Activated CD4-positive, alpha-beta T cell treated with anti-CD3 and anti-CD28 coated beads for 36 hours (primary cell): ENCODE measurements at regions of chr21 and their contacts with region 1.

Region 1: DNA sequence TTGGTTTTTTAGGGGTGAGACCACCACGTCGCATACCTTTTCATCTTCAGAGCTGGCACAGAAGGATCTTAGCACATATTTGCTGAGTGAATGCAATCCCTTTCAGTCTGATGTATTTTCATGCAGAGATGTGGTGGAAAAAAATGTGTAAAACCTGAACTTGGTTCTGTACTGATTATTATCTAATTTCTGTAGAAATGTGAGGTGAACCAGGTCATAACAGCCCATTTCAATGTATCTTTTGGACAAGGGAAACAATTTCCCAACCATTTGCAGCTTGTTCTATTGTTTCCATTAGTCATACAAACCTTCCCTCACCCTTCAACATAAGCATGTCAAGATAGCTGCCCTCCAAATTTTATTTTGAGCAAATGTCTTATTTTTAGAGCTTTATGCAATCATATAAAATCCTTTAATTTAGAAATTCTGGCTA is 46.8 kb upstream of the RUNX1 start:
- DNase-seq: peak; percentile 20
- ATAC-seq: peak; percentile 25
- H3K4me3 Mint-ChIP-seq: no peak overlapping the region
- H3K27ac Mint-ChIP-seq: peak overlapping the region; percentile 86
- H3K4me1 Mint-ChIP-seq: peaks cover 50% of the 10 kb centered on the region
- H3K27me3 Mint-ChIP-seq: peaks cover 2% of the 10 kb centered on the region

Region 2: GRCh38 chr21:34967509-34968289 is 128.2 kb before region 1 on chr21:
- CTCF ChIA-PET with region 1: no interaction called
- POLR2A ChIA-PET with region 1: no interaction called
- intact Hi-C with region 1: loop called (anchors 2 kb)
- DNase-seq: peak; percentile 73
- ATAC-seq: peak; percentile 70
- H3K4me3 Mint-ChIP-seq: peak overlapping the region; percentile 61
- H3K27ac Mint-ChIP-seq: peak overlapping the region; percentile 99
- H3K4me1 Mint-ChIP-seq: peaks cover 91% of the 10 kb centered on the region
- H3K27me3 Mint-ChIP-seq: no peaks in the 10 kb centered on the region

Region 3: GRCh38 chr21:35084869-35085268 is 11.0 kb before region 1 on chr21:
- CTCF ChIA-PET with region 1: interaction called, 9 read pairs
- POLR2A ChIA-PET with region 1: interaction called, 17 read pairs
- intact Hi-C with region 1: loop called (anchors 1 kb)
- DNase-seq: no peak
- ATAC-seq: no peak
- H3K4me3 Mint-ChIP-seq: no peak overlapping the region
- H3K27ac Mint-ChIP-seq: no peak overlapping the region
- H3K4me1 Mint-ChIP-seq: peaks cover 44% of the 10 kb centered on the region
- H3K27me3 Mint-ChIP-seq: no peaks in the 10 kb centered on the region

Region 4: DNA sequence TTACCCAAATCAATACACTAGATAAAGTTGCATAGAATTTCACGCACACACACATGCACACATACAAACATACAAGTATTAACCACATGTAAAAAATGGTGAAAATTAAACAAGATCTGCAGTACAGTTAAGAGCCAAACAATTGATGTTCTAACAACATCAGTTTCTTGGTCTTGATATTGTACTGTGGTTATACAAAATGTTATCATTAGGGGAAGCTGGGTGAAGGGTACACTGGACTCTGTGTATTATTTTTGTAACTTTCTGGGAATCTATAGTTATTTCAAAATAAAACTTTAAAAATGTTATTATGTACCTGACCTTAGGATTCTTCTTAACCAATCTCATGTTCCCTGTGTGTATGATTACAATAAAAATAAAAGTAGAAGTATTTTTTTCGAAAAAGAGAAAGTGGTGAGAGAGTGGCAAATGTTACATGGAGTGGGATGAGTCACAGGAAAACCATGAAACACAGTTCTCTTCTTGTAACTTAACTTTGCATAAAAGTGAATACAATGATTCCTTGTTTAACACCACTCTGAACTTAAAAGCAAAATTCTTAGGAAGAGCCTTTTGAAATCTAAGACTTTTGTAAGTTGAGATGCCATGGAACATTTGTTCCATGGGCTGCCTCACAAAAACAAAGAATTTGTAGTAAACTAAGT is 54.8 kb after region 1 on chr21:
- CTCF ChIA-PET with region 1: no interaction called
- POLR2A ChIA-PET with region 1: no interaction called
- intact Hi-C with region 1: loop called (anchors 2 kb)
- DNase-seq: no peak
- ATAC-seq: peak; percentile 72
- H3K4me3 Mint-ChIP-seq: peak overlapping the region; percentile 18
- H3K27ac Mint-ChIP-seq: peak overlapping the region; percentile 90
- H3K4me1 Mint-ChIP-seq: peaks cover 63% of the 10 kb centered on the region
- H3K27me3 Mint-ChIP-seq: no peaks in the 10 kb centered on the region

Region 5: DNA sequence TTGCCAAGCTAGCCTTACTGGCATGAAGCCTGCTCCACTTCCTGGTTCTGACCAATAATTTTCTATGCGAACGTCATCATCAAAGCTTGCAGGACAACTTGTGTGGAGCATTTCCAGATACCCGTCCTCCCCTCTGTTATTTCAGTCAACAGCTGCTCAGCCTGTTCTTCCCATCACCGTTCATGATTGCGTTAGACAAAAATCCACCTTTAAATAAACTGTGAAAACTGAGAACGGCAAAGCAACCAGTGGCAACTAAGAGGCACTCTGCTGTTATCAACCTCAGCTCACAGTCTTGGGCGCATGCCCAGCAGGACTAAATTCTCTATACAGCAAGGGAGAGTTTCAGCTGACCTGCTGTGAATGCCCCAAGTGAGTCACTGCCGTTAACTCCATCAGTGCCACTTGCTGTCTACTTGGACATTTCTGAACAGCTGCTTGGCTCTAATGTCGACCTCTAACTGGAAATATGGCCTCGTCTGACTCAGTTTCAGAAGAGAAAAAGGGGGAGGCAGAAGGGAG is 160.7 kb after region 1 on chr21:
- CTCF ChIA-PET with region 1: no interaction called
- POLR2A ChIA-PET with region 1: interaction called, 4 read pairs
- intact Hi-C with region 1: loop called in 1 of 2 experiments (anchors 1 kb)
- DNase-seq: no peak
- ATAC-seq: no peak
- H3K4me3 Mint-ChIP-seq: no peak overlapping the region
- H3K27ac Mint-ChIP-seq: no peak overlapping the region
- H3K4me1 Mint-ChIP-seq: peaks cover 32% of the 10 kb centered on the region
- H3K27me3 Mint-ChIP-seq: peaks cover 5% of the 10 kb centered on the region

Region 6: GRCh38 chr21:35352066-35352770 is 256.3 kb after region 1 on chr21:
- CTCF ChIA-PET with region 1: interaction called, 3 read pairs
- POLR2A ChIA-PET with region 1: no interaction called
- intact Hi-C with region 1: loop called (anchors 2 to 5 kb)
- DNase-seq: no peak
- ATAC-seq: no peak
- H3K4me3 Mint-ChIP-seq: no peak overlapping the region
- H3K27ac Mint-ChIP-seq: no peak overlapping the region
- H3K4me1 Mint-ChIP-seq: peaks cover 37% of the 10 kb centered on the region
- H3K27me3 Mint-ChIP-seq: peaks cover 5% of the 10 kb centered on the region

Region 7: GRCh38 chr21:35400233-35400957 is 304.5 kb after region 1 on chr21:
- CTCF ChIA-PET with region 1: interaction called, 4 read pairs
- POLR2A ChIA-PET with region 1: no interaction called
- intact Hi-C with region 1: loop called in 1 of 2 experiments (anchors 5 kb)
- DNase-seq: peak; percentile 42
- ATAC-seq: peak; percentile 89
- H3K4me3 Mint-ChIP-seq: peak overlapping the region; percentile 33
- H3K27ac Mint-ChIP-seq: peak overlapping the region; percentile 82
- H3K4me1 Mint-ChIP-seq: peaks cover 28% of the 10 kb centered on the region
- H3K27me3 Mint-ChIP-seq: peaks cover 2% of the 10 kb centered on the region